Posterior vena cava (tissue), 2 donors: ENCODE measurements at regions of chr20 and their contacts with region 1.

Region 1: GRCh38 chr20:18904624-18905023 is 91.0 kb downstream of the SCP2D1 start:
- DNase-seq: no peak

Region 2: DNA sequence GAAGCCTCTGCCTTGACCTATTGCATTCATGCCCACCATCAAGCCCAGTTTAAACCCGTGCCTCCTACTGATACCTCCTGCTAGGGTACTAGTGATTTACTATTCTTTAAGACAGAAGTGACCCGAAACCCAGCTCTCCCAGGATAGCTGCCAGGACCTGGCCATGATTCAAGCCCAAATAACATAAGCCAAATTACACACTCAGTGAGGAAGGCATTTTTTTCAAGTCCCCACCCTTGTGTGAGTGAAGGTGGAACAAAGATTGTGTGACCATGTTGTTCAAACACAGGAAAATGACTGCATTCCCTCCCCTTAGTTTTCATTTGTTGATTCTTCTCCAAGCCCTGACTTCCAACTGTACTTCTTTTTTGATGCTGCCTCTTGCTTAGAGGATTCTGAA is 770.7 kb before region 1 on chr20:
- intact Hi-C with region 1: no loop called
- DNase-seq: no peak

Region 3: DNA sequence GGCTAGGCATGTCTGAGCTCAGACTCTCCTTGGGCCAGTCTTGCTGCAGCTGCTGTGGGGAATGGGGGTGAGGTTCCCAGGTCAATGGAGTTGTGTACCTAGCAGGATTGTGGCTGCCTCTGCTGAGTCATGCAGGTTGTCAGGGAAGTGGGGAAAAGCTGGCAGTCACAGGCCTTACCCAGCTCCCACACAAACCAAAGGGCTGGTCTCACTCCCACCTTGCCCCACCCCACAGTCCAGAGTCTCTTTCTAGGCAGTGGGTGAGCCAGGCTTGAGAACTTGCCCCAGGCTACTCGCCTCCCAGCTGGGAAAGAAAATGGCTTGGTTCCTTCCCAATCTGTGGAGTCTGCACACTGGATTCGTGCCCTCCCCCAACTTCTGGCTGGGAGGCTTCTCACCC is 25.4 kb before region 1 on chr20:
- intact Hi-C with region 1: no loop called
- DNase-seq: peak; percentile 57

Region 4: GRCh38 chr20:19571996-19572395 is 667.4 kb after region 1 on chr20:
- intact Hi-C with region 1: loop called in 1 of 2 experiments (anchors 10 kb)
- DNase-seq: no peak